ENCODE measurements at regions of chr9 and their contacts with region 1.

Region 1: DNA sequence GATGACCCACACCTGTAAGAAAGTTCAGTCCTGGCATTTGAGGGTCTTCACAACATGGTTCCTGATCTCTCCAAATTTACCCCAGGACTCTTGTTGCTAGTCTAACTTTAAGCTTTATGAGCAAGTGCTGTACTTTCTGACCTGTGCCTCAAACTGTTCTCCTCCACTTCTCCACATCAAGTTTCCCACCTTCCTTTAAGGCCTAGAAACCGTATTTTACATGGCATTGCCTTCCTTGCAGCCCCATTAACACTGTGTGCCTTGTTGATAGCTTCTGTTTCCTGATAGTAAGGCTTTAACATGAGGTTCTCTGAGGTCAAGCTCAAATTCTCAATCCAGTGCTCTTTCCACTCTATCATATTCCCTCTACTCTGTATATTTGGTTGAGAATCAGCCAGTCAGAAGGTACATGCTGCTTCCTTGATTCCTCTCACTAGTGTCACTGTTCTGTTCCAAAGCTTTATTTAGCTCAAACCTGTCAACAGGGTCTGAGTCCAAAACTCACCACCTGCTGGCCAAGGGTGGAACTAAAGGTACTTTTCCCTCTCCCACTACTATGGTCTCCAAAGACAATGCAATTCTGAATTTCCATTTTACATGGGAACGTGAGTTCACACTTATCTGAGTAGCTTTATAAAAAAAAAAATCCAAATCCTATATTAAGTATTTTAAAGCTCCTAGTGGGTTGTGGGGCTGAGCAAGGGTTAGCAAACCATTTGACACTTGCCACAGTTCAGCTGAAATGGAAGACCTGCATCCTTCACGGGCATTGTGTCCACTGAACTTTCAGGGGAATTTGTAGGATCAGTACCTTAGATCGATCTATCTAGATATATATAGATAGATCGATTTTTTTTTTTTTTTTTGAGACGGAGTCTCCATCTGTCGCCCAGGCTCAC is 21.1 kb downstream of the VCP start:
- DNase-seq: peak in 8 of 9 experiments; percentile 19 to 65 (median 48)
- ATAC-seq: peak; percentile 84
- H3K4me3 ChIP-seq: no peak overlapping the region
- H3K4me3 Mint-ChIP-seq: no peak overlapping the region
- H3K27ac ChIP-seq: no peak overlapping the region
- H3K27ac Mint-ChIP-seq: peak overlapping the region; percentile 15
- H3K4me1 ChIP-seq: no peaks in the 10 kb centered on the region
- H3K4me1 Mint-ChIP-seq: peaks cover 4% of the 10 kb centered on the region
- H3K27me3 ChIP-seq: no peaks in the 10 kb centered on the region
- H3K27me3 Mint-ChIP-seq: no peaks in the 10 kb centered on the region
- CTCF ChIP-seq: peak; percentile 78

Region 2: DNA sequence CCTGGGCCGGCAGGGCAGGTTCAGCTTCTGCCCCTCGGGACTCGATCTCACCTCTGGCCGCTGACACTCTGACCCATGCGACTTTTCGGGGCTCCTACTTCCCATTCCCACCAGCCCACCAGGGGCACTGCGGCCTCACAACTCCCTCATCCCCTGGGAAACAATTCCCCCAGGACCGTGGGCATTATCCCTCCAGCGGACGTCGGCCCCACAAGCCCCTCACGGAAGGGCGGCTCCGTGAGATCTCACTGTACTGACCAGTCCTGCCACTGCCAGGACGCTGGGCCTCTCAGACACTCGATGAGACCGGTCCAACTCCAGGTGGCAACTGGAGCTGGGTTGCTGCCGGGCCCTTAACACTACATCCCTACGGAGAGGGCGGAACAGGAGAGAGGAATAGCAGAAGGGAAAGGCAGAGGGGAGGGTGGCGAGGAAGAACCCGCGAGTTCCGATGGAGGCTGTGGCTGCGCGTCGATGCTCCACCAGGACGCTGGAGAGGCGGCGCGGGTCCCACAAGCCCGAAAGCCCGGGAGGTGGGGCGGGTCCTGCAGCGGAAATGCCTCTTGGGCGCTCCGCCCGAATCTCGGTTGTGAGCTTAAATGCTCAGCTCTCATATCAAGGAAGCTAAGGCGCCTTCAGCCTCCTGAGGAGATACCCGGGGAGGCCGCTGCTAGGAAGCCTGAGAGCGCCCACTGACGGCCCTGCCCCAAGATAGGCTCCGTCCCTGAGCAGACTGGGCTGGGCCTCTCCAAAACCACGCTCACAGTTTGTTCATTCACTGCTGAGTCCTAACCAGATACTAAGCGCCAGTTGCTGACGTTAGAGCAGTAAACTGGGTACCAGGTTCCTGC is 15.2 kb before region 1 on chr9:
- CTCF ChIA-PET with region 1: interaction called, 13 read pairs
- POLR2A ChIA-PET with region 1: no interaction called
- intact Hi-C with region 1: no loop called
- DNase-seq: peak in 8 of 9 experiments; percentile 6 to 58 (median 38)
- ATAC-seq: peak; percentile 81
- H3K4me3 ChIP-seq: peak overlapping the region in 1 of 2 experiments; percentile 28
- H3K4me3 Mint-ChIP-seq: peak overlapping the region; percentile 50
- H3K27ac ChIP-seq: no peak overlapping the region
- H3K27ac Mint-ChIP-seq: no peak overlapping the region
- H3K4me1 ChIP-seq: peaks cover 5% of the 10 kb centered on the region
- H3K4me1 Mint-ChIP-seq: peaks cover 4% of the 10 kb centered on the region
- H3K27me3 ChIP-seq: no peaks in the 10 kb centered on the region
- H3K27me3 Mint-ChIP-seq: no peaks in the 10 kb centered on the region
- CTCF ChIP-seq: no peak

Measured in CD8-positive, alpha-beta T cell (primary cell).